ENCODE measurements at regions of chr17 and their contacts with region 1.

Region 1: GRCh38 chr17:82863941-82864774 is 24.3 kb upstream of the ZNF750 start:
- DNase-seq: peak; percentile 86
- ATAC-seq: peak; percentile 91
- H3K4me3 Mint-ChIP-seq: peak overlapping the region; percentile 82
- H3K27ac Mint-ChIP-seq: peak overlapping the region; percentile 98
- H3K4me1 Mint-ChIP-seq: peaks cover 51% of the 10 kb centered on the region
- H3K27me3 Mint-ChIP-seq: no peaks in the 10 kb centered on the region

Region 2: GRCh38 chr17:82734987-82735866 is 128.9 kb before region 1 on chr17 and contains the start of gene FN3K:
- POLR2A ChIA-PET with region 1: no interaction called
- DNase-seq: peak; percentile 66
- ATAC-seq: peak; percentile 70
- H3K4me3 Mint-ChIP-seq: peak within 1 kb of the TSS; percentile 57
- H3K27ac Mint-ChIP-seq: no peak within 1 kb of the TSS
- H3K4me1 Mint-ChIP-seq: no peaks in the 10 kb centered on the region
- H3K27me3 Mint-ChIP-seq: no peaks in the 10 kb centered on the region
- total RNA-seq, gene FN3K: 5.2 TPM

Region 3: DNA sequence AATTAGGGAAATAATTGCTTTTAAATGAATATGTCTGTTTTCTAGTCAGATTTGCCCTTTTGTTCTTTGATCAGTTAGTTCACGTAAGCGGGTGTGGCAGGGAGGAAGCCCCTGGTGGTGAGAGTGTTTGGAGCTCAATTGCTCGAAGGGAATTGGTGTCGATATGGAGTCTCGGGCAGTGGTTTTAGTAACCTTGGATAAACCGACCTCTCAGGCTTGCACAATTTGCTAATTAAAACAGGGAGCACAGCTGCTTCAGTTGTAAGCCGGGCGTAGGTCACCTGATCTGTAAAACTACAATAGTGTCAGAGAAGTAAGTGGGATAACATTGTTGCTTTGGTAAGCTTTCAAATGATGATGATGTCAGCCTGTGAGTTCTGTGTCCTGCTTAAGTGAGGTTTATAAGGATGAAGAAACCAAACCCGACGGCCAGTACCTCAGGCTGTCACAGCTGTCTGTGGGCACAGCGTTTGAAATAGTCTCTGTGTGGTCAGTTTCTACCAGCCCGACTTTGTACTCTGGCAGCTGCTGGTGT is 27.3 kb before region 1 on chr17:
- POLR2A ChIA-PET with region 1: no interaction called
- DNase-seq: no peak
- ATAC-seq: no peak
- H3K4me3 Mint-ChIP-seq: no peak overlapping the region
- H3K27ac Mint-ChIP-seq: no peak overlapping the region
- H3K4me1 Mint-ChIP-seq: no peaks in the 10 kb centered on the region
- H3K27me3 Mint-ChIP-seq: no peaks in the 10 kb centered on the region

Region 4: GRCh38 chr17:82881900-82882714 is 17.9 kb after region 1 on chr17:
- POLR2A ChIA-PET with region 1: interaction called, 48 read pairs
- DNase-seq: no peak
- ATAC-seq: no peak
- H3K4me3 Mint-ChIP-seq: peak overlapping the region; percentile 85
- H3K27ac Mint-ChIP-seq: peak overlapping the region; percentile 92
- H3K4me1 Mint-ChIP-seq: peaks cover 66% of the 10 kb centered on the region
- H3K27me3 Mint-ChIP-seq: no peaks in the 10 kb centered on the region

Region 5: GRCh38 chr17:82892899-82893565 is 28.9 kb after region 1 on chr17:
- POLR2A ChIA-PET with region 1: interaction called, 16 read pairs
- DNase-seq: peak; percentile 76
- ATAC-seq: peak; percentile 92
- H3K4me3 Mint-ChIP-seq: peak overlapping the region; percentile 71
- H3K27ac Mint-ChIP-seq: peak overlapping the region; percentile 77
- H3K4me1 Mint-ChIP-seq: peaks cover 29% of the 10 kb centered on the region
- H3K27me3 Mint-ChIP-seq: no peaks in the 10 kb centered on the region

Region 6: DNA sequence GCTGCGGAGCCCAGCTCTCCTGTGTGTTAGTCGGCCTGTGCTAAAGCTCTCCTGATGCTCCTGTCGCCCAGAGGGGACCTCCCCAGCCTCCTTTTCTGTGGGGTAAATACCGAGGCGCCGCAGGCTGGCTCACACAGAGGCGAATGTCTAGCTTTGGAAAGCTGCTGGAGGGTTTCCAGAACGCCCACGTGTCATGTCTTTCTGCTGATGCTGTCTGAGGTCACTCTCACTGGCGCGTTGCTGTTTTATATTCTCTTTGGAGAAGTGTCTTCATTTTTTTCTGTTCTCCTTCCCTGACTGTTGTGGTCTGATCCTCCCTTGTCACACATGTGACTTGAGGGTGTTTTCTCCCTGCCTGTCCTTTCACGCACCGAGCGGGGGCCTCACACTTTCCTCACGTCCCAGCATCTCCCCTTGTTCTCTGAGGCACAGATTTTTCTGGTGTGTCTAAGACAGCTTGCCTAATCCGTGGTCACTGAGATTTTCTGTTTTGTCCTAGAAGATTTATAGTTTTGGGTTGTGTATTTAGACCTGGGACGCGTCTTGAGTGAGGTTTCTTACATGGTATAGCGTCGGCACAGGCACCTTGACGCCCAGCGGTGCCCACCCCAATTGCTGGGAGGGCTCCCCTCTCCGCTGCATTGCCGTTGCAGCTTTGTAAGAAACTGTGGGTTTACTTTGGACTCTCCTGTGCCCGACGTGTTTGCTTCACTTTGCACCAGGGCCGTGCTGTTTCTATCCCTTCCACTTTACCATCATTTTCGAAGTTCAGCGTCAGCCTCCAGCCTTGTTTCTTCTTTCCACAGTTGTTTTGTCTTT is 67.8 kb after region 1 on chr17:
- POLR2A ChIA-PET with region 1: no interaction called
- DNase-seq: peak; percentile 13
- ATAC-seq: no peak
- H3K4me3 Mint-ChIP-seq: no peak overlapping the region
- H3K27ac Mint-ChIP-seq: no peak overlapping the region
- H3K4me1 Mint-ChIP-seq: no peaks in the 10 kb centered on the region
- H3K27me3 Mint-ChIP-seq: no peaks in the 10 kb centered on the region

Region 7: GRCh38 chr17:83012868-83013778 is 149.0 kb after region 1 on chr17:
- POLR2A ChIA-PET with region 1: no interaction called
- DNase-seq: no peak
- ATAC-seq: no peak
- H3K4me3 Mint-ChIP-seq: no peak overlapping the region
- H3K27ac Mint-ChIP-seq: peak overlapping the region; percentile 27
- H3K4me1 Mint-ChIP-seq: no peaks in the 10 kb centered on the region
- H3K27me3 Mint-ChIP-seq: no peaks in the 10 kb centered on the region